Calu3 (cell line): ENCODE measurements at regions of chr16 and their contacts with region 1.

Region 1: GRCh38 chr16:30893744-30894539 is at the start of gene BCL7C:
- DNase-seq: peak; percentile 98
- H3K4me3 Mint-ChIP-seq: peak within 1 kb of the TSS; percentile 75
- H3K27ac Mint-ChIP-seq: peak within 1 kb of the TSS; percentile 46
- H3K4me1 Mint-ChIP-seq: peaks cover 42% of the 10 kb centered on the region
- H3K27me3 Mint-ChIP-seq: no peaks in the 10 kb centered on the region
- CTCF ChIP-seq: peak; percentile 34
- total RNA-seq, gene BCL7C: 22.5 and 26.6 TPM in 2 replicates

Region 2: DNA sequence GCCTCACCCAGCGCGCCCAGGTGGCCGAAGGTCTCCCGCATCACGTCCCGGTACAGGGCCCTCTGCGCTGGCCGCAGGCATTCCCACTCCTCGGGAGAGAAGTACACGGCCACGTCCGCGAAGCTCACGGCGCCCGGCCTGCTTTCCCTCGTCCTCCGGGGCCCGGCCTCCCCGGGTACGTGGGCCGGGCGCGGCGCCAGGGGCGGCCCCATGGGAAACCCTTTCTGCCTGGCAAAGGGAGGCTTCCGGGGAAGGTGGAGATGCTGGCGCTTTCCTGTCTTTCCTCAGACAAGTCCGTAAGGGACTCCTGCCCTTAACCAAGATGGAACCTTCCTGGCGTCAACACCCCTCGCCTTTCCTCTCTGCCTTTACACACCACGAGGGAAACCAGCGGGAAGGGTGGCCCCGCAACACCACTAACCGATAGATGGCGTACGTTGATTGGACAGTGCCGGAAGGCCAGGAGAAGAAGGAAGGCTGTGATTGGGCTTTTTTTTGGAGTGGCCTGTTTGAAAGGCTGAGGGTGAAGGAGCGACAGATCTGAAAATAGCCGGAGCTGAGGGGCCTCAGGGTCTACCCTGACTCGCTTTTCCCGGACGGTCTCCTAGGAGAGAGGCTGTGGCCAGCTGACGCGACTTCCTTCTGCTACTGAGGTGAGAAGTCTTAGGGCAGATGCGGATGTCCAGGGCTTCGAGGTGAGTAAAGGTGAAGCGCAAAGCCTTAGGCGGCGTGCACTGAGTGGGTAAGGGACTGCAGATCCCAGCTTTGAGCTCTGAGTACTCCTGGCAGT is 308.3 kb before region 1 on chr16 and contains the start of gene ZNF785:
- CTCF ChIA-PET with region 1: interaction called, 10 read pairs
- intact Hi-C with region 1: no loop called
- DNase-seq: peak; percentile 98
- H3K4me3 Mint-ChIP-seq: peak within 1 kb of the TSS; percentile 86
- H3K27ac Mint-ChIP-seq: peak within 1 kb of the TSS; percentile 91
- H3K4me1 Mint-ChIP-seq: no peaks in the 10 kb centered on the region
- H3K27me3 Mint-ChIP-seq: no peaks in the 10 kb centered on the region
- CTCF ChIP-seq: peak; percentile 36
- total RNA-seq, gene ZNF785: 22.2 and 22.9 TPM in 2 replicates

Region 3: GRCh38 chr16:31094424-31095120 is 200.6 kb after region 1 on chr16 and contains the start of gene VKORC1:
- CTCF ChIA-PET with region 1: no interaction called
- intact Hi-C with region 1: no loop called
- DNase-seq: peak; percentile 97
- H3K4me3 Mint-ChIP-seq: peak within 1 kb of the TSS; percentile 89
- H3K27ac Mint-ChIP-seq: peak within 1 kb of the TSS; percentile 82
- H3K4me1 Mint-ChIP-seq: peaks cover 12% of the 10 kb centered on the region
- H3K27me3 Mint-ChIP-seq: no peaks in the 10 kb centered on the region
- CTCF ChIP-seq: no peak
- total RNA-seq, gene VKORC1: 80.1 and 86.8 TPM in 2 replicates